Activated CD8-positive, alpha-beta T cell treated with anti-CD3 and anti-CD28 coated beads for 36 hours (primary cell): ENCODE measurements at regions of chr3 and their contacts with region 1.

Region 1: GRCh38 chr3:16290007-16290826 is 25.2 kb downstream of the OXNAD1 start:
- DNase-seq: peak; percentile 81
- ATAC-seq: peak; percentile 12
- H3K4me3 Mint-ChIP-seq: peak overlapping the region; percentile 93
- H3K27ac Mint-ChIP-seq: peak overlapping the region; percentile 98
- H3K4me1 Mint-ChIP-seq: peaks cover 76% of the 10 kb centered on the region
- H3K27me3 Mint-ChIP-seq: no peaks in the 10 kb centered on the region
- CTCF ChIP-seq: peak; percentile 93

Region 2: GRCh38 chr3:16247276-16248061 is 42.7 kb before region 1 on chr3:
- CTCF ChIA-PET with region 1: no interaction called
- POLR2A ChIA-PET with region 1: no interaction called
- intact Hi-C with region 1: no loop called
- DNase-seq: peak; percentile 88
- ATAC-seq: peak; percentile 90
- H3K4me3 Mint-ChIP-seq: no peak overlapping the region
- H3K27ac Mint-ChIP-seq: peak overlapping the region; percentile 77
- H3K4me1 Mint-ChIP-seq: peaks cover 7% of the 10 kb centered on the region
- H3K27me3 Mint-ChIP-seq: no peaks in the 10 kb centered on the region
- CTCF ChIP-seq: peak; percentile 95

Region 3: GRCh38 chr3:16270855-16271254 is 19.4 kb before region 1 on chr3:
- CTCF ChIA-PET with region 1: interaction called, 138 read pairs
- POLR2A ChIA-PET with region 1: interaction called, 7 read pairs
- intact Hi-C with region 1: no loop called
- DNase-seq: no peak
- ATAC-seq: no peak
- H3K4me3 Mint-ChIP-seq: no peak overlapping the region
- H3K27ac Mint-ChIP-seq: no peak overlapping the region
- H3K4me1 Mint-ChIP-seq: peaks cover 25% of the 10 kb centered on the region
- H3K27me3 Mint-ChIP-seq: no peaks in the 10 kb centered on the region
- CTCF ChIP-seq: no peak

Region 4: GRCh38 chr3:16311960-16312451 is 21.8 kb after region 1 on chr3:
- CTCF ChIA-PET with region 1: interaction called, 274 read pairs
- POLR2A ChIA-PET with region 1: interaction called, 32 read pairs
- intact Hi-C with region 1: loop called (anchors 2 kb)
- DNase-seq: peak; percentile 62
- ATAC-seq: peak; percentile 38
- H3K4me3 Mint-ChIP-seq: peak overlapping the region; percentile 46
- H3K27ac Mint-ChIP-seq: peak overlapping the region; percentile 91
- H3K4me1 Mint-ChIP-seq: peaks cover 88% of the 10 kb centered on the region
- H3K27me3 Mint-ChIP-seq: no peaks in the 10 kb centered on the region
- CTCF ChIP-seq: no peak

Region 5: GRCh38 chr3:16382845-16383244 is 92.6 kb after region 1 on chr3:
- CTCF ChIA-PET with region 1: interaction called, 3 read pairs
- POLR2A ChIA-PET with region 1: interaction called, 3 read pairs
- intact Hi-C with region 1: loop called (anchors 5 kb)
- DNase-seq: peak; percentile 72
- ATAC-seq: peak; percentile 17
- H3K4me3 Mint-ChIP-seq: no peak overlapping the region
- H3K27ac Mint-ChIP-seq: peak overlapping the region; percentile 72
- H3K4me1 Mint-ChIP-seq: peaks cover 79% of the 10 kb centered on the region
- H3K27me3 Mint-ChIP-seq: no peaks in the 10 kb centered on the region
- CTCF ChIP-seq: no peak

Region 6: DNA sequence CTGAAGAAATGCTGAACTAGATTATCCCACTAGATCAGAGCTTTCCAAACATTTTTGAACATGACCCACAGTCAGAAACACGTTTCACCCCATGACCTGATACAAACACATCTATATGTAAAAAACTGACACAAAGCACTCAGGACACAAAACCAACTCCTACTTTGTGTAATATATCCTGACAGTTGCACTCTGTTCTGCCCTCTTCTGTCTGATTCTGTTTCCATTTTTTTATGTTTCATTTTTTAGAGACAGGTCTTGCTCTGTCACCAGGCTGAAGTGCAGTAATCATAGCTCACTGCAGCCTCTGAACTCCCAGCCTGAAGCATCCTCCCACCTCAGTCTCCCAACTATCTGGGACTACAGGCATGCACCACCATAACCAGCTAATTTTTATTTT is 239.0 kb after region 1 on chr3:
- CTCF ChIA-PET with region 1: interaction called, 10 read pairs
- POLR2A ChIA-PET with region 1: interaction called, 3 read pairs
- intact Hi-C with region 1: no loop called
- DNase-seq: no peak
- ATAC-seq: peak; percentile 70
- H3K4me3 Mint-ChIP-seq: no peak overlapping the region
- H3K27ac Mint-ChIP-seq: peak overlapping the region; percentile 8
- H3K4me1 Mint-ChIP-seq: peaks cover 6% of the 10 kb centered on the region
- H3K27me3 Mint-ChIP-seq: no peaks in the 10 kb centered on the region
- CTCF ChIP-seq: peak; percentile 6